CD4-positive, alpha-beta memory T cell (primary cell): ENCODE measurements at regions of chr6 and their contacts with region 1.

Region 1: DNA sequence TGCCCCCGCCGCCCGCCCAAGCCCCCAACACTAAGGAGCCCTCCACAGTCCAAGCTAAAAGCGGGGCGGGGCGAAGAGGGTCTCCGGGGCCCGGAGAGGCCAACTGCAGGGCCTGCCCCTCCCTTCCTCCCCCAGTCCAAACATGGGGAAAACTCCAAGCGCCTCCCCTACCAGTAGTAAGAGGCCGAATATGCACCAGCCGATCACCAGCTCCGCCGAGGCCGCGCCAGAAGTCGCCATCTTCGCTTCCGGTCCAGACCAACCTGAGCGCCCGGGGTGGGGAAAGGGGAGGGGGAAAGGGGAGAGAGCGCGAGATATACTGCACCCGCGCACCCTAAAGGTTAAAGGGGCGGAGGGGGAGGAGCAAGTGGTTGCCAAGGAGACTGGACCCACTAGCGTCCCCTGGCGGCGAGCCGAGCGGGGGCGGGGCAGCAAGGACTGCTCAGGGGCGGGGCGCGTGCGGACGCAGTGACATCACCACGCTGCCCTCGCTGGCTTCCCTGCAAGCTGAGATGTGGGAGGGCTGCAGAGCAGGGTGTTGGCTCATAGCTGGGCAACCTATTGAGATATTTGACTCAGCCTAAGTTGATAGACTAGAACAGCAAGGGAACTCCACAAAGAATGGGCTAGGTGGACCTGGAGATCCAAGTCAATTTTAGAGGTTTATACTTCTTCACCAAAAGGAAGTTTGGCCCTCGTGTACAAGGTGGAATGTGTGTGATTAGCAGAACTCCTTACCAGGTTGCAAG is at the start of gene LMBRD1:
- DNase-seq: peak; percentile 98 to 100 (median 99)
- H3K4me3 ChIP-seq: peak within 1 kb of the TSS; percentile 24 to 75
- H3K4me3 Mint-ChIP-seq: peak within 1 kb of the TSS; percentile 89 to 100 (median 96)
- H3K27ac ChIP-seq: peak within 1 kb of the TSS; percentile 88
- H3K27ac Mint-ChIP-seq: peak within 1 kb of the TSS; percentile 93 to 100 (median 96)
- H3K4me1 ChIP-seq: peaks cover 38% of the 10 kb centered on the region
- H3K4me1 Mint-ChIP-seq: peaks cover 31 to 58% (median 47%) of the 10 kb centered on the region in 4 donors
- H3K27me3 ChIP-seq: no peaks in the 10 kb centered on the region
- H3K27me3 Mint-ChIP-seq: no peaks in the 10 kb centered on the region
- total RNA-seq, gene LMBRD1: 53.8 to 55.7 TPM

Region 2: DNA sequence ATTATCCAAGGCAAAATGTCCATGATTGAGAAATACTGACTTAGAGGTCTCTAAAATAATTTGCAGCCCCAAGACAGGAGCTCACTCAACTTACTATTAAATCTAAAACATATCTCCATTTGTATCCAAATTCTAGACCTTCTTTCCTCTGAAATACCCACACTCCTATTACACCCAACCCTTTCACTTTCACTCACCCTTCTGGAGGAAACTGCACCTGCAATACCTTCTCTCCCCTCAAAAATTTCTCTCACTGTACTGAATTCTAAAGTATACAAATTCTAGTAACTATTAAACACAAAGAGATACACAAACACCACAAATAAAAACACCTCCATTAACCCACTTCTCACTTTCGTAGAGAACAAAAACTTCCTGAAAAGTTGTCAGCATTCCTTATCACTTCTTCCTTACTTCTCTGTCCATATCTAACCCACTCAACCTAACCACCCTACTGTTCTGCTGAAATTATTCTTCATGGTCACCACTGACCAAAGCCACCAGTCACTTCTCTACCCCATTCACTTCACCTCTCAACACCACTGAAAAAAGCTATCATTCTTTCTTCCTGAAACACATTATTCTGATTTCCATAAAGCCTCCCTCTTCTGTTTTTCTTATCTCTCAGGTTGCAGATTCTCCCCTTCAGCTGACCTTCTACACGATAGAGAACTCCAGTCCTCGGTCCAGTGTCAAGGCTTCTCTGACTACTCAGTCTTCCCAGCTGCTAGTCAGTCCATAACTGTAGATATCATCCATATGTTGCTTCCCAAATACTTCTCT is 12.0 kb before region 1 on chr6:
- CTCF ChIA-PET with region 1: interaction called, 21 read pairs
- POLR2A ChIA-PET with region 1: interaction called, 8 read pairs
- intact Hi-C with region 1: loop called (anchors 1 kb)
- DNase-seq: no peak
- H3K4me3 ChIP-seq: no peak overlapping the region
- H3K4me3 Mint-ChIP-seq: peak overlapping the region in 3 of 8 donors; percentile 6 to 46 (median 45)
- H3K27ac ChIP-seq: no peak overlapping the region
- H3K27ac Mint-ChIP-seq: peak overlapping the region in 5 of 7 donors; percentile 5 to 81 (median 47)
- H3K4me1 ChIP-seq: peaks cover 42% of the 10 kb centered on the region
- H3K4me1 Mint-ChIP-seq: peaks cover 33 to 57% (median 43%) of the 10 kb centered on the region in 4 donors
- H3K27me3 ChIP-seq: no peaks in the 10 kb centered on the region
- H3K27me3 Mint-ChIP-seq: no peaks in the 10 kb centered on the region

Region 3: DNA sequence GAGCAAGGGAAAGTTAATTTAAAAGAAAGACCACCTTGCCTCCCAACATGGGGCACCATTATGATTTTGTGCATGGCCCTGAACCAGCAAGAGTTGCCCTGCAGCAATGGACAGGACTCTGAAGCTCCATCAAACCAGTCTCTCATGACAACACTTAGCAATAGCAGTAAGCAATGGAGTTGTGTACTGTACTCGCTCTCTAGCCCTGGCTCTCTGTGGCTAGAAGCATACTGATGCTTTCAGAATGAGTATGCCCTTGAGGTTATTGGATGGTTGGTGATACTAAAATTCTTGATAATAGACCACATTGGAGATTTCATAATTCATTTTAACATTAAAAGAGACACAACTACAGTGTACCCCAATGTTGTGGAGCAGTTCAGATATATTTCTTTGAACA is 23.2 kb after region 1 on chr6:
- CTCF ChIA-PET with region 1: interaction called, 93 read pairs
- POLR2A ChIA-PET with region 1: interaction called, 92 read pairs
- intact Hi-C with region 1: loop called (anchors 1 kb)
- DNase-seq: no peak
- H3K4me3 ChIP-seq: no peak overlapping the region
- H3K4me3 Mint-ChIP-seq: no peak overlapping the region
- H3K27ac ChIP-seq: no peak overlapping the region
- H3K27ac Mint-ChIP-seq: no peak overlapping the region
- H3K4me1 ChIP-seq: peaks cover 23% of the 10 kb centered on the region
- H3K4me1 Mint-ChIP-seq: peaks cover 17 to 19% (median 19%) of the 10 kb centered on the region in 4 donors
- H3K27me3 ChIP-seq: no peaks in the 10 kb centered on the region
- H3K27me3 Mint-ChIP-seq: no peaks in the 10 kb centered on the region

Region 4: DNA sequence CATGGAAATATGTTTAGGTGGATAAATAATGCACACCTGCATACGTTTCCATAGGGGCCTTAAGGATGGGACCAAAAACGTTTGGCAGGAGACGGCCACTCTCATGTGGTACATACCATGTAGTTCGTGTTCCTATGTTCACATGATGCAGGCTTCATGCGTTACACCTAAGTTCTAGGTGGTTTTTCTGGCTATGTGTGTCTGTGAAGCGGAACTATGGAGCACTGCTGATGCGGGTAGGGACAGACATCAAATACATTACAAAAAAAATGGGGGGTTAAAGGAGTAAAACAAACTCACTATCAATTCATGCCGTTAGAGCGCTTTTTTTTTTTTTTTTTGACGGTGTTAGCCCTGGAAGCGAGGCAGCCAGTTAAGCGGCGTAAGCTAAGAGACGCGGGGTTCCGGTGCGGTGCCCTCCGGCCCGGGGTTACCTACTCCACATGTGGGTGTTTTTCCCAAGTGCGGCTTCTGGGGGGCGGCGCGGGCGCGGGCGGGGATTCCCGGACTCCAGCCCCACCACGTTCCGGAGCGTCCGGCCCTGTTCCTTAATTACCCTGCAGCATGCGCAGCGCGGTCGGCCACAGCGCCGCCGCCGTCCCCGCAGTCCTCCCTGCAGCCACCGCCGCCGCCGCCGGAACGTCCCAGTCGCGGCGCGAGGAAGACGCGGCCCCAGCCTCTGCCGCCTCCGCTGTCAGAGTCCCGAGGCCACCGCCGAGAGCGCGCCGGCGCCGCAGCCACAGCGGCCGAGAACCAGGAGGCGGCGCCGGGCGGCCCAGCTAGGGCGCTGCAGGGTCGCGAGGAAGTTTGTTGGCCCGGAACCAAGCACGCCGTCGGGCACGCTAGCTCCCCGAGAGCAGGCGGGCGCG is 70.2 kb after region 1 on chr6:
- CTCF ChIA-PET with region 1: interaction called, 12 read pairs
- POLR2A ChIA-PET with region 1: interaction called, 20 read pairs
- intact Hi-C with region 1: loop called (anchors 1 kb)
- DNase-seq: peak; percentile 54 to 62 (median 58)
- H3K4me3 ChIP-seq: peak overlapping the region; percentile 29 to 37
- H3K4me3 Mint-ChIP-seq: peak overlapping the region; percentile 83 to 97 (median 92)
- H3K27ac ChIP-seq: peak overlapping the region; percentile 24
- H3K27ac Mint-ChIP-seq: peak overlapping the region; percentile 43 to 90 (median 71)
- H3K4me1 ChIP-seq: peaks cover 14% of the 10 kb centered on the region
- H3K4me1 Mint-ChIP-seq: peaks cover 11 to 23% (median 18%) of the 10 kb centered on the region in 4 donors
- H3K27me3 ChIP-seq: peaks cover 9% of the 10 kb centered on the region
- H3K27me3 Mint-ChIP-seq: peaks cover 8 to 13% of the 10 kb centered on the region in 2 donors

Region 5: GRCh38 chr6:70566751-70567382 is 770.1 kb after region 1 on chr6 and contains the start of gene SDHAF4:
- CTCF ChIA-PET with region 1: interaction called, 4 read pairs
- POLR2A ChIA-PET with region 1: no interaction called
- intact Hi-C with region 1: loop called (anchors 10 kb)
- DNase-seq: peak; percentile 93 to 95 (median 94)
- H3K4me3 ChIP-seq: peak within 1 kb of the TSS; percentile 77 to 85
- H3K4me3 Mint-ChIP-seq: peak within 1 kb of the TSS; percentile 83 to 93 (median 91)
- H3K27ac ChIP-seq: peak within 1 kb of the TSS; percentile 81
- H3K27ac Mint-ChIP-seq: peak within 1 kb of the TSS; percentile 41 to 95 (median 92)
- H3K4me1 ChIP-seq: peaks cover 19% of the 10 kb centered on the region
- H3K4me1 Mint-ChIP-seq: peaks cover 13 to 25% (median 19%) of the 10 kb centered on the region in 4 donors
- H3K27me3 ChIP-seq: no peaks in the 10 kb centered on the region
- H3K27me3 Mint-ChIP-seq: no peaks in the 10 kb centered on the region
- total RNA-seq, gene SDHAF4: 12.3 to 13.8 TPM